SK-N-SH (cell line): ENCODE measurements at regions of chr19 and their contacts with region 1.

Region 1: DNA sequence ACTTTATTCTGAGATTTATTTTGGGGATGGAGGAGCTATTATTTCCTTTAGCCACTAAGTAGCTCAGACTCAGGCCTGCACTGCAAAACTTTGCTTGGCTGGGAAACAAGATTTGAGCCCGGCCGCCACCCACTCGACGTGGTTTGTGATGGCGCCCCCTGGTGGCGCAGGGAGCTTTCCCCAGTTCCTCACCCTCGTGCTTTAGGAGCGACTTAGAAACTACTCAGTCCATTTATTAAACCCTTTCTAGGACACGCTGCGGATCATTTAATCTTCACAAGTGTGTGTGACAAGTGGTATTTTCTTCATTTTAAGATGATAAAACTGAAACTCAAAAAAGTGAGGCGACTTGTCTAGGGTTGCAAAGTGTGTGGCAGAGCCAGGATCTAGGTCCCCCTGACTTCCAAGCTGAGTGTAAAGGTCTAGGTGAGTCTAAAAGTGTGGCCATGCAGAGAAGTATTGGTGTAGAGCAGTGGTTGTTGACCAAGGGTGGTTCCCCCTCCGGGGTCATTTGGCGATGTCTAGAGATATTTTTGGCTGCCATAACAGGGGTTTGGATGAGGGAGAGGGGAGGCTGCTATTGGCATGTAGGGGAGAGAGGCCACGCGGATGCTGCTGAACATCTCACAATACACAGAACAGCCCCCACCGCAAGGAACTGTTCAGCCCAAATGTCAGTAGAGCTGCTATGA is 2.2 kb downstream of the CXCL17 start:
- DNase-seq: peak; percentile 59
- H3K4me3 ChIP-seq: no peak overlapping the region
- H3K27ac ChIP-seq: no peak overlapping the region
- H3K4me1 ChIP-seq: no peaks in the 10 kb centered on the region
- H3K27me3 ChIP-seq: no peaks in the 10 kb centered on the region
- CTCF ChIP-seq: peak; percentile 94
- EP300 ChIP-seq: no peak
- RAD21 ChIP-seq: peak; percentile 22; the same call in 1 of the 2 replicates

Region 2: DNA sequence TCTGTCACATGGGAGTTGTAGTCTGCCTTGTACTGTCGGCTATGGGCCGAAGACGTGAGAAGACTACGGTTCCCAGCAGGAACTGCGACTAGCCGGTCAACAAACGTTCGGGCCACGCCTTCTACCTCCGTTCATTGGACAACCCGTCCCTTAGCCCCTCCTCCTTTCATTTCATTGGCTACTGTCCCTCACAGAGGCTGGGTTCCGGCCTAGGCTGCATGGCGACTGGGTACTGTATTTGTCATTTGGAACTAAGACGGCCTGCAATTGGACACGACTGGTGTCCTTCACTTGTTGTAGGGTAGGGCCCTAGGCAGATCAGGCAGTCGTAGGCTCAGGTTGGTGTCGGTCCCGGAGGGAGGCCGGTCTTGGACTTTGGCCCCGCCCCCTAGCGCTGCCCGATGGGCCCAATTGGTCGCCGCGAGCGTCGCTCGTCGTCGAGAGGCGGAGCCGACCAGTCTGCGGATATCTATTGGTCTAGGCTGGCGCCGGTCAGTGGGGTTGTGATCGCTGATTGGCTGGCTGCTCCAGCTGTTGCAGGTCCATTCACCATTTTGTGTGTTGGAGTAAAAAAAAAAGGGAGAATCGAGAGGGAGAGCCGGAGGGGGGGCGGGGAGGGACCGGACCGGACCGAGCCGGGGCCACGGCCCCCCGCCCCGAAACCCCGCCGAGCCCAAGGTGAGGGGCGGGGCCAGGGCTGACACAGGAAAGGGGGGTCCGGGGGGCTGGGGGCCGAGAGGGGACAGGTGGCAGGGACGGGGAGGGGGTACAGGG is 171.6 kb before region 1 on chr19 and contains the start of gene CIC:
- CTCF ChIA-PET with region 1: no interaction called
- POLR2A ChIA-PET with region 1: no interaction called
- DNase-seq: peak; percentile 94
- H3K4me3 ChIP-seq: peak within 1 kb of the TSS; percentile 74 to 88
- H3K27ac ChIP-seq: peak within 1 kb of the TSS; percentile 98 to 99
- H3K4me1 ChIP-seq: peaks cover 13 to 29% of the 10 kb centered on the region in 2 experiments; a peak in 3 of 4 replicates
- H3K27me3 ChIP-seq: no peaks in the 10 kb centered on the region
- CTCF ChIP-seq: no peak
- EP300 ChIP-seq: no peak
- RAD21 ChIP-seq: no peak
- polyA plus RNA-seq, gene CIC: 8.6 and 16.9 TPM in 2 replicates

Region 3: DNA sequence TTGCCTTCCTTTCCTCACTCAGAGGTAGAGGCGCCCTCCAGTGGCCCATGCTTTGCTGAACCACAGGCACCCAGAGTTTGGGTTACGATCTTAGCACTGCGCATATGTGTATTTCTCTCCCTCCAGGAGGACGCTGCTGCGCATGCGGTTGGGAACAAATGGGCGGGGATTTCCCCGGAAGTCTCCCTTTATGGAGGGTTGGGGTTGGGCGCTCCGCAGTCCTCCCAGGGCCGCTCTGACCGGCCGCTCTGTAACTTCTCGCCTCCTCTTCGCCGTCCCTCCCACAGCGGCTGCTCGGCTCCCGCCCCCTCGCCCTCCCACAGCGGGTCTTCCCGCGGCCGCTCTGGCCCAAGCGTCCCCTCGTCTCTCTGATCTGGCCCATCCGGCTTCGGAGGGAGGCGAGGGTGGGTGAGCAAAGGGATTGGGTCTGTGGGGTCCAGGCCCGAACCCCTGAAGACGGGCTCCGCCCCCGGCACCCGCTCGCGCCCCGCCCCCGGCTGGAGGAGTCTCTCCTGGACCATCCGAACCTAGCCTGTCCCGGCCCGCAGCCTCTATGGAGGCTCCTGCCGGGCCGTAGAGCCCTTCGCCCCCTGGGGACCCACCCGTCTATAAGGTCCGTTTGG is 115.1 kb before region 1 on chr19 and contains the start of gene MEGF8:
- CTCF ChIA-PET with region 1: no interaction called
- POLR2A ChIA-PET with region 1: no interaction called
- DNase-seq: peak; percentile 98
- H3K4me3 ChIP-seq: peak within 1 kb of the TSS; percentile 80 to 99
- H3K27ac ChIP-seq: peak within 1 kb of the TSS; percentile 69 to 71
- H3K4me1 ChIP-seq: peaks cover 8 to 16% of the 10 kb centered on the region in 2 experiments; a peak in 1 of 4 replicates
- H3K27me3 ChIP-seq: no peaks in the 10 kb centered on the region
- CTCF ChIP-seq: peak; percentile 94
- EP300 ChIP-seq: no peak
- RAD21 ChIP-seq: peak; percentile 83
- polyA plus RNA-seq, gene MEGF8: 12.0 and 19.1 TPM in 2 replicates

Region 4: GRCh38 chr19:42401365-42402303 is 38.9 kb before region 1 on chr19:
- CTCF ChIA-PET with region 1: interaction called, 15 read pairs
- POLR2A ChIA-PET with region 1: no interaction called
- DNase-seq: peak; percentile 90
- H3K4me3 ChIP-seq: peak overlapping the region; percentile 44 to 59
- H3K27ac ChIP-seq: peak overlapping the region in 1 of 2 experiments; percentile 63; a peak in 2 of 4 replicates
- H3K4me1 ChIP-seq: peaks cover 0 to 20% of the 10 kb centered on the region in 2 experiments; a peak in 1 of 4 replicates
- H3K27me3 ChIP-seq: no peaks in the 10 kb centered on the region
- CTCF ChIP-seq: peak; percentile 88
- EP300 ChIP-seq: no peak
- RAD21 ChIP-seq: peak; percentile 57

Region 5: GRCh38 chr19:42423462-42424344 is 16.8 kb before region 1 on chr19:
- CTCF ChIA-PET with region 1: interaction called, 23 read pairs
- POLR2A ChIA-PET with region 1: no interaction called
- DNase-seq: peak; percentile 98
- H3K4me3 ChIP-seq: peak overlapping the region; percentile 69 to 86
- H3K27ac ChIP-seq: peak overlapping the region; percentile 27 to 34; a peak in 1 of 4 replicates
- H3K4me1 ChIP-seq: peaks cover 0 to 21% of the 10 kb centered on the region in 2 experiments; a peak in 1 of 4 replicates
- H3K27me3 ChIP-seq: no peaks in the 10 kb centered on the region
- CTCF ChIP-seq: no peak
- EP300 ChIP-seq: no peak
- RAD21 ChIP-seq: no peak

Region 6: GRCh38 chr19:42455621-42456081 is 15.1 kb after region 1 on chr19:
- CTCF ChIA-PET with region 1: interaction called, 43 read pairs
- POLR2A ChIA-PET with region 1: no interaction called
- DNase-seq: no peak
- H3K4me3 ChIP-seq: no peak overlapping the region
- H3K27ac ChIP-seq: no peak overlapping the region
- H3K4me1 ChIP-seq: no peaks in the 10 kb centered on the region
- H3K27me3 ChIP-seq: no peaks in the 10 kb centered on the region; the same call in 1 of the 2 replicates
- CTCF ChIP-seq: no peak
- EP300 ChIP-seq: no peak
- RAD21 ChIP-seq: no peak

Region 7: GRCh38 chr19:42471554-42472249 is 31.2 kb after region 1 on chr19:
- CTCF ChIA-PET with region 1: interaction called, 12 read pairs
- POLR2A ChIA-PET with region 1: no interaction called
- DNase-seq: no peak
- H3K4me3 ChIP-seq: no peak overlapping the region
- H3K27ac ChIP-seq: no peak overlapping the region
- H3K4me1 ChIP-seq: peaks cover 0 to 10% of the 10 kb centered on the region in 2 experiments; a peak in 2 of 4 replicates
- H3K27me3 ChIP-seq: no peaks in the 10 kb centered on the region
- CTCF ChIP-seq: no peak
- EP300 ChIP-seq: no peak
- RAD21 ChIP-seq: no peak

Region 8: DNA sequence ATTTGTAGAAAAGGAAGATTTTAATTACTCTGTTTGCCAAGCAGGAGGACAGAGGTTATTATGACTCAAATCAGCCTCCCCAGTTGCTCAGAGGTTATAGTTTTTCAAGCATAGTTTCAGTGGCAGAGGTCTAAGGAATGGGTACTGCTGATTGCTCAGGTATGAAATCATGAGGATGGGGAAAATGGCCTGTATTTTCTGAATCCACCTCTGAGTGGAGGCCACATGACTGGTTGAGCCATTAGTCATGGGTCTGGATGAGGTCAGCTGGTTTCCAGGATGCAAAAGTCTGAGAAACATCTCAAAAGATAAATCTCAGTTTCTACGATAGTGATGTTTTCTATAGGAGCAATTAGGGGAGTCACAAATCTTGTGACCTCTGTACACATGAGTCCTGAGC is 217.1 kb after region 1 on chr19:
- CTCF ChIA-PET with region 1: no interaction called
- POLR2A ChIA-PET with region 1: no interaction called
- DNase-seq: no peak
- H3K4me3 ChIP-seq: no peak overlapping the region
- H3K27ac ChIP-seq: no peak overlapping the region
- H3K4me1 ChIP-seq: no peaks in the 10 kb centered on the region
- H3K27me3 ChIP-seq: peaks cover 9% of the 10 kb centered on the region; the same call in 1 of the 2 replicates
- CTCF ChIP-seq: no peak
- EP300 ChIP-seq: no peak
- RAD21 ChIP-seq: no peak